ENCODE measurements at regions of chr20 and their contacts with region 1.

Region 1: GRCh38 chr20:45771182-45771759 is 20.4 kb downstream of the WFDC3 start:
- DNase-seq: peak; percentile 61
- ATAC-seq: peak; percentile 87
- H3K4me3 ChIP-seq: no peak overlapping the region
- H3K27ac ChIP-seq: no peak overlapping the region; the same call in 1 of the 2 replicates
- H3K4me1 ChIP-seq: peaks cover 2 to 19% of the 10 kb centered on the region in 2 experiments; a peak in 1 of 4 replicates
- H3K27me3 ChIP-seq: no peaks in the 10 kb centered on the region; the same call in 1 of the 2 replicates
- CTCF ChIP-seq: peak; percentile 84 to 97 (median 96)
- POLR2A ChIP-seq: no peak
- RAD21 ChIP-seq: peak; percentile 99

Region 2: DNA sequence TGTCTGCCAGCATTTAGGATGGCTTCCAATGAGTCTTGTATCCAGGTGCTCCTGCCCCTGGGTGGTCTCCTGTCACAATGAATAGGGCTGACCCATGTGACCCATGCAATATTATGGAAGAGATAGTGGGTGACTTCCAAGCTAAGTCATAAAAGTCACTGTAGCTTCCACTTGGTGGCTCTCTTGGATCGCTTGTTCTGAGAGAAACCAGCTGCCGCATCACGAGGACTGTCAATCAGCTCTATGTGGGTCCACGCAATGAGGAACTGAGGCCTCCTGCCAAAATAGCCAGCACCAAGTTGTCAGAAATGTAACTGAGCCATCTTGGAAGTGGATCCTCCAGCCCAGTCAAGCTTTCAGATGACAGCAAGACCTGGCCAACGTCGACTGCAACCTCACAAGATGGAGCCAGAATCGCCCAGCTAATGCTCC is 448.3 kb before region 1 on chr20:
- CTCF ChIA-PET with region 1: interaction called, 22 read pairs
- POLR2A ChIA-PET with region 1: no interaction called
- RAD21 ChIA-PET with region 1: interaction called, 4 to 7 read pairs
- intact Hi-C with region 1: loop called (anchors 1 kb)
- DNase-seq: peak; percentile 31
- ATAC-seq: peak; percentile 68
- H3K4me3 ChIP-seq: no peak overlapping the region
- H3K27ac ChIP-seq: no peak overlapping the region
- H3K4me1 ChIP-seq: no peaks in the 10 kb centered on the region
- H3K27me3 ChIP-seq: no peaks in the 10 kb centered on the region
- CTCF ChIP-seq: peak; percentile 13 to 79 (median 28); a peak in 3 of 6 replicates
- POLR2A ChIP-seq: no peak
- RAD21 ChIP-seq: peak; percentile 91

Region 3: GRCh38 chr20:45373353-45374100 is 397.7 kb before region 1 on chr20:
- CTCF ChIA-PET with region 1: interaction called, 19 read pairs
- POLR2A ChIA-PET with region 1: no interaction called
- RAD21 ChIA-PET with region 1: no interaction called
- intact Hi-C with region 1: loop called (anchors 1 kb)
- DNase-seq: peak; percentile 57
- ATAC-seq: peak; percentile 92
- H3K4me3 ChIP-seq: no peak overlapping the region
- H3K27ac ChIP-seq: no peak overlapping the region
- H3K4me1 ChIP-seq: peaks cover 0 to 15% of the 10 kb centered on the region in 2 experiments; a peak in 2 of 4 replicates
- H3K27me3 ChIP-seq: no peaks in the 10 kb centered on the region
- CTCF ChIP-seq: peak; percentile 87 to 95 (median 93)
- POLR2A ChIP-seq: no peak
- RAD21 ChIP-seq: peak; percentile 89

Region 4: GRCh38 chr20:45456632-45457031 is 314.6 kb before region 1 on chr20:
- CTCF ChIA-PET with region 1: interaction called, 30 read pairs
- POLR2A ChIA-PET with region 1: no interaction called
- RAD21 ChIA-PET with region 1: interaction called in 1 of 2 experiments, 8 read pairs
- intact Hi-C with region 1: loop called (anchors 1 kb)
- DNase-seq: peak; percentile 71
- ATAC-seq: peak; percentile 94
- H3K4me3 ChIP-seq: no peak overlapping the region
- H3K27ac ChIP-seq: no peak overlapping the region
- H3K4me1 ChIP-seq: peaks cover 0 to 6% of the 10 kb centered on the region in 2 experiments; a peak in 2 of 4 replicates
- H3K27me3 ChIP-seq: no peaks in the 10 kb centered on the region
- CTCF ChIP-seq: peak; percentile 53 to 65 (median 63)
- POLR2A ChIP-seq: no peak
- RAD21 ChIP-seq: peak; percentile 62

Region 5: GRCh38 chr20:45545754-45546453 is 225.4 kb before region 1 on chr20:
- CTCF ChIA-PET with region 1: interaction called, 25 read pairs
- POLR2A ChIA-PET with region 1: no interaction called
- RAD21 ChIA-PET with region 1: interaction called, 3 to 5 read pairs
- intact Hi-C with region 1: loop called (anchors 1 kb)
- DNase-seq: peak; percentile 21
- ATAC-seq: peak; percentile 81
- H3K4me3 ChIP-seq: no peak overlapping the region
- H3K27ac ChIP-seq: no peak overlapping the region
- H3K4me1 ChIP-seq: no peaks in the 10 kb centered on the region
- H3K27me3 ChIP-seq: peaks cover 49% of the 10 kb centered on the region; the same call in 1 of the 2 replicates
- CTCF ChIP-seq: peak; percentile 24 to 61 (median 59); a peak in 4 of 6 replicates
- POLR2A ChIP-seq: no peak
- RAD21 ChIP-seq: peak; percentile 81

Region 6: DNA sequence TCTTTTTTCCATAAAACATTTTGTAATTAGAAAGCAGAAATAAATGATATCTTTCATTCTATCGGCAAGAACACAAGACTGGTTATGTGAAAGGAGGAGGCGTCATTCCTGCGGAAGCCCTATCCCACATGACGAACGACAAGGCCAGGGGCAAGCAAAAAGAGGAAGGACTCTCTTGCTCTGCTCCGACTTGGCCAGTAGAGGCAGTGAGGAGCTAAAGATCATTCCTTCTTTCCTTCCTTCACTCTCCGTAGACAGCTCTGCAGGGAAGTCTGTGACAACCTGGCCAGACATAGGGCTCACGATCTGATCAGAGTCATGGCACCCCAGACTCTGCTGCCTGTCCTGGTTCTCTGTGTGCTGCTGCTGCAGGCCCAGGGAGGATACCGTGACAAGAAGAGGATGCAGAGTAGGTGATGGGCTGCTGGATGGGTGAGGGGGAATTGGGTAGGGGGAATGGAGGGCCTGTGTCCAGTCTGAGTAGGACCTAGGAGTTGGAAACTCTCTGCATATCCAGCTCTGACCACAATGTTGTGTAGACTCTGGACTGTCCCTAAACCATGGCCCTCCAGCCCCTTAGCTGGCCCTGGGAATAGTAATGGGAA is 141.7 kb before region 1 on chr20 and contains the start of gene WFDC10A:
- CTCF ChIA-PET with region 1: interaction called, 22 read pairs
- POLR2A ChIA-PET with region 1: no interaction called
- RAD21 ChIA-PET with region 1: interaction called, 9 to 10 read pairs
- intact Hi-C with region 1: loop called (anchors 1 kb)
- DNase-seq: peak; percentile 69
- ATAC-seq: peak; percentile 100
- H3K4me3 ChIP-seq: no peak within 1 kb of the TSS
- H3K27ac ChIP-seq: no peak within 1 kb of the TSS
- H3K4me1 ChIP-seq: peaks cover 0 to 4% of the 10 kb centered on the region in 2 experiments; a peak in 2 of 4 replicates
- H3K27me3 ChIP-seq: no peaks in the 10 kb centered on the region
- CTCF ChIP-seq: peak; percentile 56 to 86 (median 78); a peak in 5 of 6 replicates
- POLR2A ChIP-seq: no peak
- RAD21 ChIP-seq: peak; percentile 63
- total RNA-seq, gene WFDC10A: 0.47 TPM

Region 7: DNA sequence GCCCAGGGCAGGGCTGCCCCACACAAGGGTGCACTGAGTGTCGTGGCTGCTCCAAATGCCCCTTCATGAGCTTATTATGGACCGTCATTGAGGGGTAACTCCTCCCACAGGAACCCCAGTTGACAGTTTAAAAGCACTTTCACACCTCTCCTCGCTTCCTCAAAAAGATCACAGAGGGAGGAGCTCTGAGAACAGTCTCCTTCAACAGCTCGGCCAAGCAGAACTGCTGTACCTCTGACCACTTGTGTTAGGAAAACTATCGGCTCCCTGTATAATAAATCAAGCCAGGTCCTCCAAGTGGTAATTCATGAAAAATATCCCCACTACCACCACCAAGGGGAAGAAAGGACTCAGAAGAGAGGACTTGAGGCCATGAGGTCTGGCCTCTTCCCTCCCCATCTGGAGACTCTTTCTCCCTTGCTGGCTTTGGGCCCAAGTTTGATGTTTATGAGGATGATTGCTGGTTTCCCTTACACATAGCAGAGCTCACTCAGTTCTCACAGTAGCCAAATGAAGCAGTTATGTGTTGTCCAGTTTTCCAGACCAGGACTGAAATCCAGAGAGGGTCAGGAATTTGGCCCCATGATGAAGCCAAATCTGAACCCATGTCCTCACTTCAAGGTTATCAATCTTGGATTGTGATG is 71.0 kb after region 1 on chr20:
- CTCF ChIA-PET with region 1: no interaction called
- POLR2A ChIA-PET with region 1: no interaction called
- RAD21 ChIA-PET with region 1: no interaction called
- intact Hi-C with region 1: no loop called
- DNase-seq: no peak
- ATAC-seq: no peak
- H3K4me3 ChIP-seq: no peak overlapping the region
- H3K27ac ChIP-seq: no peak overlapping the region
- H3K4me1 ChIP-seq: no peaks in the 10 kb centered on the region
- H3K27me3 ChIP-seq: no peaks in the 10 kb centered on the region
- CTCF ChIP-seq: no peak
- POLR2A ChIP-seq: no peak
- RAD21 ChIP-seq: no peak